ENCODE measurements at regions of chr14 and their contacts with region 1.

Region 1: DNA sequence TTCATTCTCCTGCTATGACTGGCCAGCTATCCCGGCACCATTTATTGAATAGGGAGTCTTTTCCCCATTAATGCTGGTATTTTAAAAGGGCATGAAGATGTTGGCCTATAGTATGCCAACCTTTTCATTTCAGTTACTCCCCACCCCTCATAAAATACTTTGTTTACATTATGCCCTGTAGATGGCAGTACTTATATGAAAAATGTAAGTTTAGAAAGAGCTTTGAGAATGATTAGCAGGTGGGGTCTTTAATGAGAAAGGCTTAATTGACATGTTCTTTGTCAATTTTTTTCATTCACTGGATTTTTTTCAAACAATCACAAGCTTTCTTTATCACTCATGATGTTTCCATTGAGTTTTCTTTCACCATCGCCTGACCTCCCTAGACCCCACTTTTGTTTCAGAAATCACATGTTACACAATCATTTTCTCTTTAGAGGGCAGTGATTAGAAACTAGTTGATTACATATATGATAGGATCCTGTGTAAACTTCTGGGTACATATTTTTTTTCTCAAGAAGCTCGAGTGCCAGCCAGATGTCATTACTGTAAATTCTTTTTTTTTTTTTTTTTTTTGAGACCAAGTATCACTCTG is 62.6 kb upstream of the PSMA6 start:
- DNase-seq: no peak
- H3K4me3 ChIP-seq: no peak overlapping the region
- CTCF ChIP-seq: no peak

Region 2: GRCh38 chr14:34693228-34693939 is 536.2 kb before region 1 on chr14:
- CTCF ChIA-PET with region 1: no interaction called
- POLR2A ChIA-PET with region 1: no interaction called
- DNase-seq: no peak
- H3K4me3 ChIP-seq: no peak overlapping the region
- CTCF ChIP-seq: no peak

Region 3: GRCh38 chr14:34750670-34751069 is 478.9 kb before region 1 on chr14:
- CTCF ChIA-PET with region 1: no interaction called
- POLR2A ChIA-PET with region 1: no interaction called
- DNase-seq: peak; percentile 44
- H3K4me3 ChIP-seq: no peak overlapping the region
- CTCF ChIP-seq: no peak

Region 4: DNA sequence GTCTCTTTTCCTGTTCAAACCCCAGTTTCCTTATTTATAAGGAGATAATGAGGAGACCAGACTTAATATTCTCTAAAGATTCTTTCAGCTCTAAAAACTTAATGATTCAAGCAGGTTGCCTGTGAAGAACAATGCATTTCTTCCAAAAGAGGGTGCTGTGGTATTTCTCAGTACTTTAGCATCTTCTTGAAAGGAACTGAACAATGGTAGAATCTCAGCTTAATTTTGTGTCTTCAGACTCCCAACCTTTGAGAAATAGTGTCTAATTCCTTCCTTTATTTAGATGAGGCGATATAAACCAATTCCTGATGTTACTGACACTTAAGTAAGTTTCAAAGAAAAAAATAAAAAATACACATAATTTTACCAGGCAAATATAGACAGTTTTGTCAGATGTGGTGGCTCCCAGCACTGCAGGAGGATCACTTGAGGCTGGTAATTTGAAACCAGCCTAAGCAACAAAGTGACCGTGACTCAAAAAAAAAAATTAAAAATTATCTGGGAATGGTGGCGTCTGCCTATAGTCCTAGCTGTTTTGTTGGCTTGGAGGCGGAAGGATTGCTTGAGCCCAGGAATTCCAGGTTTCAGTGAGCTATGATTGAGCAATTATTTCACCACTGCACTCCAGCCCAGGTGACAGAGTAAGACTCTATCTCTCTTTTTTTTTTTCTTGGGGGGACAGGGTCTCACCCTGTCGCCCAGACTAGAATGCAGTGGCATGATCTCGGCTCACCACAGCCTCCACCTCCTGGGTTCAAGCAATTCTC is 14.3 kb before region 1 on chr14:
- CTCF ChIA-PET with region 1: interaction called, 44 read pairs
- POLR2A ChIA-PET with region 1: no interaction called
- DNase-seq: peak; percentile 29
- H3K4me3 ChIP-seq: no peak overlapping the region
- CTCF ChIP-seq: peak; percentile 45

Region 5: DNA sequence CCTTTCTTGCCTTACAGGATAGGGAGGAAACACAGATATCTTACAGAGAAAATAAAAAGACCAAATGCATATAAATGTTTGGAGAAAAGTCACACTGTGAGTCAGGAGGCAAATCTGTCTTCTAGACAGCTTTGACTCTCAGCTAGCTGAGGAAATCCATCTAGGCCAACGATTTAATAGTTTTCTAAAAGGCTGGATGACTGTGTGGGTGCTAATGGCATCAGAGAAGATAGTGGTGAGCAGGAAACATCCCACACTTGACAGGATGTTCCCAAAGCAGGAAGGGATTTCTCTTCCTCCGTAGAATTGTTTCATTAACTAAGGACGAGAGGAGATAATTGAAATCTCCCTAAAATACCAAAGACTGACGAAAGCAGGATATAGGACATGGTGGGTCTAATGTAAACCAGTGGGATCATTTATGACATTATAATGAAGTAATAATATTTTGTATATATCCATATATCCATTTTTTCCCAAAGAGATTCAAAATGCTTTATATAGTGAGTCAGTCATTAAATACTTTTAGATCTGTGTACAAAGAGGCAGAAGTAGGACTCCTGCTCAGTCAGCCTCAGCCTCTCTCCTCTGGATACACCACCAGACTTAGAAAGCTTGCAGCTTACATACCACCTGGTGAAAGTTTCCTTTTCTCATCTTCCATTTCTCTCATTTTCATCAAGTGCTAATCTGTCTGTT is 18.3 kb after region 1 on chr14:
- CTCF ChIA-PET with region 1: interaction called, 19 read pairs
- POLR2A ChIA-PET with region 1: no interaction called
- DNase-seq: no peak
- H3K4me3 ChIP-seq: no peak overlapping the region
- CTCF ChIP-seq: no peak

Region 6: GRCh38 chr14:35254736-35255135 is 25.1 kb after region 1 on chr14:
- CTCF ChIA-PET with region 1: interaction called, 10 read pairs
- POLR2A ChIA-PET with region 1: no interaction called
- DNase-seq: no peak
- H3K4me3 ChIP-seq: no peak overlapping the region
- CTCF ChIP-seq: no peak

Region 7: GRCh38 chr14:35416108-35416750 is 186.6 kb after region 1 on chr14:
- CTCF ChIA-PET with region 1: interaction called, 34 read pairs
- POLR2A ChIA-PET with region 1: no interaction called
- DNase-seq: no peak
- H3K4me3 ChIP-seq: no peak overlapping the region
- CTCF ChIP-seq: no peak

Region 8: DNA sequence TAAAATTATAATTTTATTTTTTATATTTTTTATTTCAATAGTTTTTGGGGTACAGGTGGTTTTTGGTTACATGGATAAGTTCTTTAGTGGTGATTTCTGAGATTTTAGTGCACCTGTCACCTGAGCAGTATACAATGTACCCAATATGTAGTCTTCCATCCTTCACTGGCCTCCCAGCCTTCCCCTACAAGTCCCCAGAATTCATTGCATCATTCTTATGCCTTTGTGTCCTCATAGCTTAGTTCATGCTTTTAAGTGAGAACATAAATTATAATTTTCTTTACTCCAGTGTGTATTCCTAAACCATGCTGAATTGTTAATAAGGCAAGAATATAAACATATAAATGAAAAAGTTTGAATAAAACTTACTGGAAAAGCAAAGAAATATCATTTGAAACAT is 194.0 kb after region 1 on chr14:
- CTCF ChIA-PET with region 1: interaction called, 12 read pairs
- POLR2A ChIA-PET with region 1: no interaction called
- DNase-seq: no peak
- H3K4me3 ChIP-seq: no peak overlapping the region
- CTCF ChIP-seq: no peak

Region 9: GRCh38 chr14:35519986-35520385 is 290.4 kb after region 1 on chr14:
- CTCF ChIA-PET with region 1: no interaction called
- POLR2A ChIA-PET with region 1: no interaction called
- DNase-seq: no peak
- H3K4me3 ChIP-seq: no peak overlapping the region
- CTCF ChIP-seq: no peak

Region 10: DNA sequence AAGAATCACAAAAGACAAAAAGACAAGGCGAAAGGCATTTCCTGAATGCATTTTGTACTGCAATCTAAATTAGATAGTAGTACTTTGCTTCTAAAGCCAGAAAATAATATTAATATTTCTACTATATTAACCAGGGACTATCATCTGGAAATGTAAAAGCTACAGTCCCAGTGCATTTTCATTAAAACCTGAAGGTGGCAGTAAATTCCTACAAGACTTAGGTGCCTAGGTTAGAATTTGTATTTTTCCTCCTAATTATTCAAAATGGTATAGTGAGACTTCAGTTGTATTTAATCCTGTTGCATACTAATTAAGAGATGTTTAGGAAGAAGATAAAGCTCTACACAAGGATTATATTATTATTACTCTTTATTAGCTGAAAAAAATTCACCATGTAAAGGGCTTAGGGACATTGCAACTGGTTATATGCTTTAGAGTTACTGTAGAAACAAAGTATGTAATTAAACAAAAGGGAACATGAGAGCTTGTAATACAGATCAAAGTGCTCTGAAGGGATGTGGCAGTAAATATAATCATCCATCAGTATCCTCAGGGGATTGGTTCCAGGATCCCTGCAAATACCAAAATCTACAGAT is 650.2 kb after region 1 on chr14:
- CTCF ChIA-PET with region 1: no interaction called
- POLR2A ChIA-PET with region 1: no interaction called
- DNase-seq: no peak
- H3K4me3 ChIP-seq: no peak overlapping the region
- CTCF ChIP-seq: peak; percentile 19